ENCODE measurements at regions of chr6 and their contacts with region 1.

Region 1: GRCh38 chr6:43769526-43770416 is at the start of gene VEGFA:
- DNase-seq: peak; percentile 83
- ATAC-seq: peak; percentile 61
- H3K4me3 ChIP-seq: peak within 1 kb of the TSS; percentile 90 to 98 (median 95)
- H3K27ac ChIP-seq: peak within 1 kb of the TSS; percentile 86
- H3K4me1 ChIP-seq: peaks cover 64% of the 10 kb centered on the region
- H3K27me3 ChIP-seq: no peaks in the 10 kb centered on the region; a peak in 1 of 5 replicates
- CTCF ChIP-seq: peak; percentile 99
- EP300 ChIP-seq: 0 out of 4 replicates have a peak, but pooled peaks of 1 of the 2 experiments have one; percentile 19
- POLR2A ChIP-seq: peak in 1 of 2 experiments; percentile 91; a peak in 2 of 4 replicates
- RAD21 ChIP-seq: peak; percentile 93
- total RNA-seq, gene VEGFA: 34.1 and 68.1 TPM in 2 replicates

Region 2: GRCh38 chr6:43673444-43674084 is 96.2 kb before region 1 on chr6:
- CTCF ChIA-PET with region 1: interaction called, 3 read pairs
- POLR2A ChIA-PET with region 1: interaction called, 10 read pairs
- in situ Hi-C with region 1: no loop called
- intact Hi-C with region 1: no loop called
- DNase-seq: no peak
- ATAC-seq: no peak
- H3K4me3 ChIP-seq: no peak overlapping the region
- H3K27ac ChIP-seq: peak overlapping the region; percentile 39
- H3K4me1 ChIP-seq: peaks cover 54% of the 10 kb centered on the region
- H3K27me3 ChIP-seq: no peaks in the 10 kb centered on the region
- CTCF ChIP-seq: no peak
- EP300 ChIP-seq: no peak
- POLR2A ChIP-seq: no peak
- RAD21 ChIP-seq: no peak

Region 3: DNA sequence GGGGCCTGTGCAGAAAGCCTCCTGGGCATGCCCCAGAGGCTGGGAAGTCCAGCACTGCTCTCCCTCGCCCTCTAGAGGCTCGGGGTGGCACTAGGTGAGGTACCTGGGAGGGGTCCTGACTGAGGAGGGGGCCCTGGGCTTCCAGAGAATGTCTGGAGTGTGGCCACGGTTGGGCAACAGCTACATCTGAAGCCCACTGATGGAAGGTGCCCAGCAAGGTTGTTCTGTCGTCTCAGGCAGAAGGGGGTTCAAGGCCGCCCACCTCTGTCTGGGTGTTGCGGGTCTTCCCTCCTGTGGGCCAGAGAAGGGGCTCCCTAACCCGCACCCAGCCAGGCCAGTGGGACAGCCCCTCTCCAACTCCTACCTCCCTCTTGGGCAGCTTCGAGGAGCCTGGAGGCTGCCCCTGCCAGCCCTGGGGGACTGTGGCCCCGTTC is 11.1 kb before region 1 on chr6:
- CTCF ChIA-PET with region 1: no interaction called
- POLR2A ChIA-PET with region 1: interaction called, 11 read pairs
- in situ Hi-C with region 1: no loop called
- intact Hi-C with region 1: no loop called
- DNase-seq: no peak
- ATAC-seq: peak; percentile 83
- H3K4me3 ChIP-seq: no peak overlapping the region
- H3K27ac ChIP-seq: no peak overlapping the region
- H3K4me1 ChIP-seq: peaks cover 46% of the 10 kb centered on the region
- H3K27me3 ChIP-seq: peaks cover 13 to 52% of the 10 kb centered on the region in 2 experiments; a peak in 4 of 5 replicates
- CTCF ChIP-seq: peak; percentile 86
- EP300 ChIP-seq: no peak
- POLR2A ChIP-seq: no peak
- RAD21 ChIP-seq: peak; percentile 80

Region 4: GRCh38 chr6:43823879-43824702 is 54.3 kb after region 1 on chr6:
- CTCF ChIA-PET with region 1: interaction called, 19 read pairs
- POLR2A ChIA-PET with region 1: interaction called, 19 read pairs
- in situ Hi-C with region 1: no loop called
- intact Hi-C with region 1: no loop called
- DNase-seq: peak; percentile 81
- ATAC-seq: peak; percentile 96
- H3K4me3 ChIP-seq: peak overlapping the region in 2 of 3 experiments; percentile 19 to 55; a peak in 3 of 6 replicates
- H3K27ac ChIP-seq: no peak overlapping the region
- H3K4me1 ChIP-seq: peaks cover 68% of the 10 kb centered on the region
- H3K27me3 ChIP-seq: peaks cover 2 to 19% of the 10 kb centered on the region in 2 experiments; a peak in 3 of 5 replicates
- CTCF ChIP-seq: peak; percentile 55
- EP300 ChIP-seq: peak in 1 of 2 experiments; percentile 51; a peak in 1 of 4 replicates
- POLR2A ChIP-seq: no peak
- RAD21 ChIP-seq: peak; percentile 64

Region 5: DNA sequence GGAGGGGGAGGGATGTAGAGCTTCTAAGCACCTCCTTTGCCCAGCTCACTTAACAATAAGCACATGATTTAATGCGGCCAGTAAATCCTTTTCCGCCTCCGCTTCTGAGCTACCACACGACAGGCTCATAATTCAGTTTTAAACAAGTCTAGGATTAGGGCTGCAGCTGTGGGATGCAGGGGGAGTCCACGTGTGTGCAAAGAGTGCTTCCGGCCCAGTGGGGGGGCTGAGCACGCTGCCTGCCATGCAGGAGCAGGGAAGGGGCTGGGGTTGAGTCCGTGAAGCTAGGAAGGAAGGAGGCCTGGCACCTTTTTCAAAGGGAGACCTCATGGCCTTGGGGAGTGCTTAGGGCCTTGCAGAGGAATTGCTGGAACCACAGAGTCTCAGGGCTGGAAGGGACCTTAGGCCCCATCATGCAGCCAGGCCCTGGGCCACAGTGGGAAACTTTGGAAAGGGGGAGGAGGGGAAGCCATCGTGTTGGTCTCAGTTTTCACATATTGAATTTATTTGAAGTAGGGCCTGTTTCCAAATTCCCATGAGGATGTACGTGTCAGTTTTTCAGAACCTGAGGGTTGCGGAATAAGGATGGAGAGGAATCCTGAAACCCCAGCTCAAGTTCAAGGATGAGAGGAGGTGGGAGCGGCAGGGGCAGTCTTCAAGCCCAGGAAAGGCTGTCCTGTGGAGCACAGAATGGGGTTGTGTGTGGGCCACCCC is 96.3 kb after region 1 on chr6:
- CTCF ChIA-PET with region 1: no interaction called
- POLR2A ChIA-PET with region 1: no interaction called
- in situ Hi-C with region 1: no loop called
- intact Hi-C with region 1: no loop called
- DNase-seq: no peak
- ATAC-seq: no peak
- H3K4me3 ChIP-seq: no peak overlapping the region
- H3K27ac ChIP-seq: no peak overlapping the region
- H3K4me1 ChIP-seq: peaks cover 27% of the 10 kb centered on the region
- H3K27me3 ChIP-seq: peaks cover 9 to 61% of the 10 kb centered on the region in 2 experiments; a peak in 4 of 5 replicates
- CTCF ChIP-seq: no peak
- EP300 ChIP-seq: no peak
- POLR2A ChIP-seq: no peak
- RAD21 ChIP-seq: no peak

Region 6: GRCh38 chr6:43900911-43901732 is 131.4 kb after region 1 on chr6:
- CTCF ChIA-PET with region 1: no interaction called
- POLR2A ChIA-PET with region 1: interaction called, 14 read pairs
- in situ Hi-C with region 1: no loop called
- intact Hi-C with region 1: no loop called
- DNase-seq: peak; percentile 57
- ATAC-seq: peak; percentile 82
- H3K4me3 ChIP-seq: peak overlapping the region in 2 of 3 experiments; percentile 29 to 55; a peak in 4 of 6 replicates
- H3K27ac ChIP-seq: peak overlapping the region; percentile 54
- H3K4me1 ChIP-seq: peaks cover 67% of the 10 kb centered on the region
- H3K27me3 ChIP-seq: no peaks in the 10 kb centered on the region
- CTCF ChIP-seq: no peak
- EP300 ChIP-seq: peak in 1 of 2 experiments; percentile 67; a peak in 1 of 4 replicates
- POLR2A ChIP-seq: no peak
- RAD21 ChIP-seq: no peak

Region 7: GRCh38 chr6:43951063-43951755 is 181.4 kb after region 1 on chr6:
- CTCF ChIA-PET with region 1: interaction called, 33 read pairs
- POLR2A ChIA-PET with region 1: interaction called, 59 read pairs
- in situ Hi-C with region 1: loop called (anchors 5 kb)
- intact Hi-C with region 1: loop called (anchors 1 kb)
- DNase-seq: peak; percentile 73
- ATAC-seq: peak; percentile 95
- H3K4me3 ChIP-seq: peak overlapping the region in 1 of 3 experiments; percentile 20; a peak in 1 of 6 replicates
- H3K27ac ChIP-seq: no peak overlapping the region
- H3K4me1 ChIP-seq: peaks cover 71% of the 10 kb centered on the region
- H3K27me3 ChIP-seq: peaks cover 0 to 2% of the 10 kb centered on the region in 2 experiments; a peak in 1 of 5 replicates
- CTCF ChIP-seq: peak; percentile 100
- EP300 ChIP-seq: peak in 1 of 2 experiments; percentile 32; a peak in 1 of 4 replicates
- POLR2A ChIP-seq: no peak
- RAD21 ChIP-seq: peak; percentile 100

Measured in HepG2 (cell line).